ENCODE measurements at regions of chr17 and their contacts with region 1.

Region 1: GRCh38 chr17:45394913-45395568 is 37.6 kb downstream of the ARHGAP27 start:
- DNase-seq: peak; percentile 85

Region 2: DNA sequence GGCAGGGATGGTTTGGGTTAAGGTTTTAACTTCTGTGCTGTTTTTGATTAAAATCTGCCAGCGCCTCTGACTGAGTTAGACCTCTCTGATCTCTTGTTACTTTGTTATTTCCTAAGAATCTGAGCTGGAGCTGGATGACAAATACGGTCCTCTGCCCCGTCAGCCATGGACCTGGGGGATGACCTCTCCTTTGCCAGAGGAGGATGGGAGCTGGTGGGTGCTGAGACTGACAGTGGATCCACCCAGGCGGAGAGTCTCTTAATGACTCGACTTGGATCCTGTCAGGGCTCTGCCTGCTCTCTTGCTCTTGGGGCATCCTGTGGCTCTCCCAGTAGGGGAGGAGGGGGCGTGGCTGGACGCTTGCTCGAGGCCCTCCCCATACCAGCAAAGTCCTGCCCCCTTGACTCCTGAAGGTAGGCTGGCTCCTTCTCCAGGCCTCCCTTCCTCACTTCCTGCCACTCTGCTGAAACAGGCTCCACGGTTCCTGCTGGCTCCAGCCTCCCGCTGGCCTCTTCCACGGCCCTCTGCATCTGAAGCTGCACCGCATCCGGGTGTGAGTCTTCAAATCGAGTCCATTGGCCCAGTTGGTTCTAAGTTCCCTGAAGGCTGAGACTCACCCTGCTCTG is 53.4 kb before region 1 on chr17:
- intact Hi-C with region 1: no loop called
- DNase-seq: peak; percentile 78

Region 3: GRCh38 chr17:45425984-45426413 is 31.0 kb after region 1 on chr17:
- intact Hi-C with region 1: loop called (anchors 2 kb)
- DNase-seq: no peak

Region 4: DNA sequence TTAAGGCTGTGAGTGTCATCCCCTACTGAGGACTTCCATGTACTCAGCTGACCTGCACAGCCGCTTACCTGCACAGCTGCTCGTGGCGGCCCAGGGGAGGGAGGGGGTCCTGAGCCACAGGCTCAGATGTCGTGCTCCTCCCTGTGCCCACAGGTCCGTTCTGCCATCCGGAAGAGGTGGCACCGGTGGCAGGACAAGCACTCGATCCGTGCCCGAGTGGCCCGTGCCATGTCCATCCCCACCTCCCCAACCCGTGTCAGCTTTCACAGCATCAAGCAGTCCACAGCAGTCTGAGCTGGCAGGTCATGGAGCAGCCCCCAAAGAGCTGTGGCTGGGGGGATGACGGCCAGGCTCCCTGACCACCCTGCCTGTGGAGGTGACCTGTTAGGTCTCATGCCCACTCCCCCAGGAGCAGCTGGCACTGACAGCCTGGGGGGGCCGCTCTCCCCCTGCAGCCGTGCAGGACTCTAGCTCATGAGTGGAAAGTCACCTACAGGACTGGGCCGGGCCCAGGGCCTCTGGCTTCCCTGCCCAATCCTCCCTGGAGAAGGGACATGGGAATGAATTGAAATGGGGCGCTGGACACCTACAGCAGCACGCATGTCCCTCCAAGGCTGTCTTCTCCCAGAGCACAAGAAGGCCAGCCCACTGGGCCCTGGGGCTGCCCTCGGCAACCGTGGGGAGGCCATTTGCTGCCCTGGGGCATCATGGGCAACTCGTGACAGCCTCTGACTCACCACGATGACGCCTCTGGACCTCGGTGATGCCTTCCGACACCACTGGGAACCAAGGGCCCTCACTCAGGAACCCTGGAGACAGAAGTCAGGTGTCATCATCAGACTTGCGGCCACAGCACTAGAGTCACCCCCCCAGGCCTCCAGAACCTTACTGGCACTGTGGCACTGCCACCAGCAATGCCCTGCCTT is 439.7 kb after region 1 on chr17:
- intact Hi-C with region 1: loop called (anchors 10 kb)
- DNase-seq: no peak